Activated T-helper 2 cell treated with anti-CD3 and anti-CD28 coated beads, Interferon-gamma antibody, Interleukin-2, Interleukin-4, amounts not matched to agents 10 μg/mL and 5 μg/mL and 100 μg/mL, durations not matched to agents 14 hours and 24 hours and 36 hours (primary cell): ENCODE measurements at regions of chr18 and their contacts with region 1.

Region 1: DNA sequence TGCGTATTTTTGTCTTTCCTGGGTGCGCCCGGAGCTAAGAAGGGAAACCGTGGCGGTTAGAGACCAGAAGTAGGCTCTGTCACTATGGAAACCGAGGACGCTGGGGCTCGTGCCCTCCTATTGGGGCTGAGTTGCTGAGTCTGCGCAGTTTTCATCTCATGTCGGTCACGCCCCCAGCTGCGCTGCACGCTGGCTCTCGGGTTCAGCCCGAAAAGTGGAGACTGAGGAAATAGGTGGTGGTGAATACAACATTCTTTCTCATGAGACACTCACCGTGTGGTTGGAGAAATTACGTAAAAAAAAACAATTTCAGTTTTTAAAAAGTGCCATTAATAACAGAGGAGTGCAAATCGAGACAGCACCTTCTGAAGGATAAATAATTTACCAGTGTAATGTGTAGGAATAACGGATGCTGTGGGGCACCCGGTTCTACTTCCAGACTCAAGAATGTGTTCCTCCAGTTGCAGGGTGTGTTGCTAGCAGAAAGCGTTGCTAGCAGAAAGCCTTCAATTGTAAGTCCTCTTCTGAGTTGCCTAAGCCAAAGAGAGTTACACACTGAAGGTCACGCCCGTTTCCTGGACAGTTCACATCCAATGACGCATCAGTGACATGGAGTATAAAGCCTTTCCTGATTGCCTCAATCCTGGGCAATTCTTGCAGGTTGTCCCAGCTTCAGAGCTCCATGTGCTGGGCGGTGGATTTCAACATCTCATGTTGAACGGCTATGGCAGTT is 20.4 kb upstream of the CXXC1 start:
- DNase-seq: peak; percentile 87
- H3K4me3 Mint-ChIP-seq: peak overlapping the region; percentile 89
- H3K27ac Mint-ChIP-seq: peak overlapping the region; percentile 57
- H3K4me1 Mint-ChIP-seq: peaks cover 21% of the 10 kb centered on the region
- H3K27me3 Mint-ChIP-seq: peaks cover 17% of the 10 kb centered on the region

Region 2: GRCh38 chr18:50266248-50266704 is 41.6 kb before region 1 on chr18 and contains the start of gene CFAP53:
- intact Hi-C with region 1: loop called (anchors 1 kb)
- DNase-seq: peak; percentile 79
- H3K4me3 Mint-ChIP-seq: peak within 1 kb of the TSS; percentile 80
- H3K27ac Mint-ChIP-seq: peak within 1 kb of the TSS; percentile 62
- H3K4me1 Mint-ChIP-seq: peaks cover 11% of the 10 kb centered on the region
- H3K27me3 Mint-ChIP-seq: peaks cover 7% of the 10 kb centered on the region
- total RNA-seq, gene CFAP53: 0.25 and 0.51 TPM in 2 replicates

Region 3: DNA sequence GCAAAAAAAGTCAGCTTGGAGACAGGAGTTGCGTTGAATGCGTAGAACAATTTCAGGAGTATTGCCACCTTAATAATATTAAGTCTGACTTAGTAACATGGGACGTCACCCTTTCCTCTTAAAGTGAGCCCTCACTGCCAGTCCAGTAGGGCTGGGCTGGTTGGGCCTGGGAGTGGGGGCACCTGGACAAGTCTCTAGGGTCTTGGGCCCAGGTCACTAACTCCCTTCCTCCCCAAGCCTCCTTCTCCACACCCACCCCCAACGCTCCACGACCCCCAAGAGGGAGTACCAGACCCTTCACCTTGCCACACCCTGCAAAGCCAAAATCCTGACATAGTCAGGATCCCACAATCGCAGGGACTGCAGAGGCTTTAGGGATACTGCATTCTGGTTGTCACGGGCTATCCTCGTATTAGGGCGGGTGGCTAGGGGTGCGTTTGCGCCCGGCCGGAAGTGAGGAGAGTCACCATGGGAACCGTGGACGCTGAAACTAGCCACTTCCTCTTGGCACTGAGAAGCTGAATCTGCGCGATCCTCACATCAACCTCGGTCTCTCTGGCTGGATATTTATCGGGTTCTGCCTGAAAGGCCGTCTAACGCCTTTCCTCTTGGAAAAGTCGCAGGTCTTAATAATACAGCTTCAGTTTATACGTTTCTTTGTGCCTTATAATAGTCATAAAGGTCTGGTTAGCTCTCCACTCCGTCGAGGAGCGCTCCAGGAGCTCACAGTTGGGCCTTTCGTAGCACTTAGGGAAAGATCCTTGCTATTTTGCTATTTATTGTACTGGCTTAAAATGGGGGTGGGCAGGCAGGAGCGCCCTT is 10.1 kb before region 1 on chr18:
- intact Hi-C with region 1: loop called (anchors 1 kb)
- DNase-seq: peak; percentile 72
- H3K4me3 Mint-ChIP-seq: peak overlapping the region; percentile 62
- H3K27ac Mint-ChIP-seq: no peak overlapping the region
- H3K4me1 Mint-ChIP-seq: peaks cover 12% of the 10 kb centered on the region
- H3K27me3 Mint-ChIP-seq: peaks cover 31% of the 10 kb centered on the region